Activated CD4-positive, alpha-beta memory T cell treated with anti-CD3 and anti-CD28 coated beads, Interleukin-2, amount 10 ng/mL, durations not matched to agents 7 days and 5 days (primary cell): ENCODE measurements at regions of chr9 and their contacts with region 1.

Region 1: GRCh38 chr9:114405294-114406034 is 17.7 kb upstream of the AKNA start:
- DNase-seq: peak; percentile 84
- H3K4me3 Mint-ChIP-seq: no peak overlapping the region
- H3K27ac Mint-ChIP-seq: no peak overlapping the region
- H3K4me1 Mint-ChIP-seq: peaks cover 16% of the 10 kb centered on the region
- H3K27me3 Mint-ChIP-seq: no peaks in the 10 kb centered on the region

Region 2: DNA sequence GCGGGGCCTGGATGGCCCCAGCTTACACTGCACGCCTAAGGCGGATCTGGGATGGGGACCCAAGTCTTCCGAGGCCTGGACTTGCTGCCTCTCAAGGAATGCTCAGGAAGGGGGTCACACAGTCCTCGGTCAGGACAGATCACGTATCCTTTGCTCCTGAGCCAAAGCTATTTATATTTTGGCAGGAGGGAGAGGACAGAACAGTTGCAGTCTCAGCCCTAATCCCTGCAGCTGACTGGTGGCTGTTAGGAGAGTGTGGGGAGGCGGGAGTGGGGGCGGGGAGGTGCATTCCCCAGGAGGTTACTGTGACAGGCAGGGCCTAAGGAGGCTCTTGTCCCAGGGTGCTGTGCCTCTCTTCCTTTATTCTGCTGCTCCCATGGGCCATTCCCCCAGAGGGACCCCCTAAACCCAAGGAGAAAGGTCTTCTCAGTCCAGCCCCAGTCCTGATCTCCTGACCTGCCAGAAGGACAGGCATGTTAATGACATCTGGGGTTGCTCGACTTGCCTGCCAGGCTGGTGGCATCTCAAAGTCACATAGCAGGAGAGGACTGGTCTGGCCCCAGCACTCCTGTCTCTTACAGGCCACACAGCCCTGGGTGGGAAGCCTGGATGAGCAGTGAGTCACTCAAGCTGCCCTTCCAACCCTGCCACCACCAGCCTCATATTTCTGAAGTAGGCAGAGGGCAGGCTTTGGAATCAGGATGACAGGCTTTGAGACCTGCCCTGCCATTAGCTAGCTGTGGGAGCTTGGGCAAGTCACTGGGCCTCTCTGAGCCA is 198.2 kb before region 1 on chr9:
- CTCF ChIA-PET with region 1: no interaction called
- POLR2A ChIA-PET with region 1: no interaction called
- DNase-seq: no peak
- H3K4me3 Mint-ChIP-seq: no peak overlapping the region
- H3K27ac Mint-ChIP-seq: no peak overlapping the region
- H3K4me1 Mint-ChIP-seq: no peaks in the 10 kb centered on the region
- H3K27me3 Mint-ChIP-seq: no peaks in the 10 kb centered on the region

Region 3: DNA sequence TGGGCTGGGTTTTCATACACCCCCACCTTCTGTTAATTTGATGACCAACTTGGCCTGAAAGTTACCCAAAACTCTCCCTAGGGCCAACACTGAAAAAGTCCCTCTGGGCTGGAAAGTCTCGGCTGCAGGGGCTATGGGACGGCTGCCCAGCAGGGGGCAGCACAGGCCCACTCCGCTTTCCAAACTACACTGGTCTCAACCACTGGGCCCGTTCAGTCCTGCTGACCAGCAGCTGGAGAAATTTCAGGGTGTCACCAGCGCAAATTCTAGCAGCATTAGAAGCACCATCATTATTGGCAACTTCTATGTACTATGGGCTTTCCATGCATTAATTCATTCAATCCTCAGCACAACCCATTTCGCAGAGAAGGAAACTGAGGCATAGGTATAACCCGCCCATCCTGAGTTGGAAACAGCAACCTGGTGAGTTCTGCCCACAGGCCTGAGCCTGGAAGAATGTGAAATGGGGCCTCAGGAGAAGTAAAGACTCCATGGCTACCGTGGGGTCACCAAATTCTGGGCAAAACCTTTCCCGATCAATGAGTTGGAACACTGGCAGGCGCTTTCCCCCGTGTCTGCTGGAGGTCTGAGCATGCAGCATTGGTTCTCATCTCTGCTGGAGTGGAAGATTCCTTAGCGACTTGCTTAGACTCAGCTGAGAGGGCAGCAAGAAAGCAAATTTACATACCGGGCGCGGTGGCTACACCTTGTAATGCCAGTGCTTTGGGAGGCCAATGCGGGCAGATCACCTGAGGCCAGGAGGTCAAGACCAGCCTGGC is 66.1 kb before region 1 on chr9:
- CTCF ChIA-PET with region 1: interaction called, 10 read pairs
- POLR2A ChIA-PET with region 1: no interaction called
- DNase-seq: peak; percentile 60
- H3K4me3 Mint-ChIP-seq: no peak overlapping the region
- H3K27ac Mint-ChIP-seq: no peak overlapping the region
- H3K4me1 Mint-ChIP-seq: peaks cover 9% of the 10 kb centered on the region
- H3K27me3 Mint-ChIP-seq: no peaks in the 10 kb centered on the region

Region 4: DNA sequence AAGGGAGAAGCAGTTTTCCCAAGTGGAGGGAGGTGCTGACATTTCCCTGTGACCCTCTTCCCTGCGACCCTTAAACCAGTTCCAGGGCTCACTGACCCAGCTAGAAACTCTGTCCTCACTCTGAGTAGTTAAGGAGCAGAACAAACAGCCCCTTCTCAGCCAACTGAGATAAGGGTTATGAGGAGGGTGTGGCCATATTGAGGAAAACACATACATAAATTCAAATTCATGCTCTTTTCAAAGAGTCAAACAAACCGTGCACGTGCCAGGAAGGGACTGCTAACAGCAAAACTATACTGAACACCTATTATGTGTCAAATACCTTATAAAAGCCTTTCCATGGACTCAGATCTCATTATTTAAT is 12.7 kb before region 1 on chr9:
- CTCF ChIA-PET with region 1: interaction called, 12 read pairs
- POLR2A ChIA-PET with region 1: interaction called, 135 read pairs
- DNase-seq: no peak
- H3K4me3 Mint-ChIP-seq: no peak overlapping the region
- H3K27ac Mint-ChIP-seq: peak overlapping the region; percentile 47
- H3K4me1 Mint-ChIP-seq: peaks cover 81% of the 10 kb centered on the region
- H3K27me3 Mint-ChIP-seq: no peaks in the 10 kb centered on the region

Region 5: GRCh38 chr9:114487607-114488300 is 82.3 kb after region 1 on chr9:
- CTCF ChIA-PET with region 1: interaction called, 22 read pairs
- POLR2A ChIA-PET with region 1: interaction called, 4 read pairs
- DNase-seq: peak; percentile 63
- H3K4me3 Mint-ChIP-seq: no peak overlapping the region
- H3K27ac Mint-ChIP-seq: no peak overlapping the region
- H3K4me1 Mint-ChIP-seq: peaks cover 34% of the 10 kb centered on the region
- H3K27me3 Mint-ChIP-seq: peaks cover 12% of the 10 kb centered on the region

Region 6: DNA sequence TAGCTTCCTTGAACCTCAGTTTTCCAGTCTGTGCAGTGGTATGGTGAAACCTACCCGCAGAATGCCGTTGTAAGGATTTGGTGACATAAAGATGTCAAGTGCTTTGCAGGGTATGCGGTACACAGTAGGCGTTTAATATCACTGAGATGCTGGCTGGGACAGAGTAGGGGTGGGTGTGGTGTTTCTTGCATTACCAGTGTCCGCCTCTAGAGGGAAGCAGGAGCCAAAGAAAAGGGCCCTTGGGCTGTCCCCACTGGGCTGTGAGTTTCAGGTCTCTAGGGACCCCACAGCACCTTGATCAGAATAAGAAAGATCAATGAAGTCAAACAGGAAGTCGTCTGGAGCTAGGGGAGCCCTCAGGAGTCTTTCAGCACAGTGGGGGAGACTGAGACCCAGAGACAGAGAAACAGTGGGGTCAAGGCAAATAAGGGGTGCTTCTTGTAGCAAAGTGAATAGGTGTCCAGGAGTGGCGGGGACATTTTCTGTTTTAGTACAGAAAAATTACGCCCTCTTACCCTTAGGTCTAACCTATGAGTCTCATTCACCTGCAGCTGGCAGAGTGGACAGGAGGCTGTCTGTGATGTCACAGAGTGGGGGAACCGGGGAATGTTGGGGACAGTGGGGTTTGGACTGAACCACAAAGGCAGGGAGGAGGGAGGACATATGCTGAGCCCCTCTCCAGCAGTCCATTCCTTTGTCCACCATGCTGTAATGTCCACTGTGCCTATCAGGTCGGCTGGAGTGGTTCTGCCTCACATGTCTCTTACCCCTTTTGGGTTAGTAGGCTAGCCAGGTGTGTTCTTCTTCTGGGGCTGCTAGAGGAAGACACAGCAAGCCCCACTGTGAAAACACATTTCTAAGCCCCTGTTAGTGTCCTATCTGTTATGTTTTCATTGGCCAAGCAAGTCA is 256.9 kb after region 1 on chr9:
- CTCF ChIA-PET with region 1: interaction called, 10 read pairs
- POLR2A ChIA-PET with region 1: no interaction called
- DNase-seq: peak; percentile 68
- H3K4me3 Mint-ChIP-seq: no peak overlapping the region
- H3K27ac Mint-ChIP-seq: no peak overlapping the region
- H3K4me1 Mint-ChIP-seq: no peaks in the 10 kb centered on the region
- H3K27me3 Mint-ChIP-seq: peaks cover 12% of the 10 kb centered on the region

Region 7: DNA sequence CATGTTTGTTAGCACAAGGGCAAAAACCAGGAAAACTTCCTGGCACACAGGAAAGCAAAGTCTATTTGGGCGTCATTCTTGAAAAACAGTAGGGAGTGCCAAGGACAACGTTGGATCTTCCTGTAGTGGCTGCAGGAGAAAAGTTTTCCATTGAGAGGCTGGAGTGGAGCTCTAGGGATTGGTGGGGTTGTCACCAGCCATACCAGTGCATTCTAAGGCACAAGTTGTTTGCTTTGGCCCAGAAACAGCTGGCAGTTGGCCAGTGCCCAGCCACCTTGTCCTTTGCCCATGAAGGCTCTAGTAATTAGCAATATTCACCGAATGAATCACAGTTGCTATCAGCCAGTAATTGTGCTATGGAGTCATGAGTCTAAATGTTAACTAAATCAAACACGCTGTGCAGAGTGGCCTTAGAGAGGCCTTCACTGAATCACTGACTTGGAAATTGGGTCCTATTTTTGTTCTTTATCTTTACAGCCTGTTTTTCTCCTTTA is 373.9 kb after region 1 on chr9:
- CTCF ChIA-PET with region 1: no interaction called
- POLR2A ChIA-PET with region 1: no interaction called
- DNase-seq: no peak
- H3K4me3 Mint-ChIP-seq: no peak overlapping the region
- H3K27ac Mint-ChIP-seq: no peak overlapping the region
- H3K4me1 Mint-ChIP-seq: peaks cover 18% of the 10 kb centered on the region
- H3K27me3 Mint-ChIP-seq: peaks cover 42% of the 10 kb centered on the region